Activated CD4-positive, alpha-beta T cell treated with anti-CD3 and anti-CD28 coated beads for 36 hours (primary cell): ENCODE measurements at regions of chr1 and their contacts with region 1.

Region 1: GRCh38 chr1:117605774-117606648 is at the start of gene TENT5C:
- DNase-seq: peak; percentile 98
- ATAC-seq: peak; percentile 96
- H3K4me3 Mint-ChIP-seq: peak within 1 kb of the TSS; percentile 92
- H3K27ac Mint-ChIP-seq: peak within 1 kb of the TSS; percentile 86
- H3K4me1 Mint-ChIP-seq: peaks cover 37% of the 10 kb centered on the region
- H3K27me3 Mint-ChIP-seq: peaks cover 2% of the 10 kb centered on the region
- total RNA-seq, gene TENT5C: 6.0 to 6.4 TPM

Region 2: DNA sequence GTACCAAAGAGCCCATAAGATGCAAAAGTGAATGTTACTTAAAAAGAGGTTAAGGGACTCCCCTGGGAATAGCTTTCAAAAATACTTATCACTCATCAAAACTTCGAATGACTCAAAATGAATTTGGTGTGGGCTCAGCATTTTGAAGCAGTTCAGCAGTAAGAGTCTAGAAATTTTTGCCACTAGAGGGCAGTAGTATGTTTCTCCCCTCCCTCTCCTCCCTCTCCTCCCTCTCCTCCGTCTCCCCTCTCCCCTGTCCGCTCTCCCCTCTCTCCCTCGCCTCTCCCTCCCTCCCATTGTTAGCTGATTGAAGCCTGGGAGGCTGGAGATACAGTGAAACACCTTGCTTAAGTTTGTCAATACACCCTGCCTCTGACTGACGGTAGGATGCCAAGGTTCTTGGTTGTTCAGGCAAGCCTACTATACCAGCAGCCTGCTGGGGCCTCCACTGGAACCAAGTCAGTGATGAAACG is 71.0 kb before region 1 on chr1:
- CTCF ChIA-PET with region 1: interaction called, 15 read pairs
- POLR2A ChIA-PET with region 1: interaction called, 3 read pairs
- intact Hi-C with region 1: loop called (anchors 1 kb)
- DNase-seq: peak; percentile 48
- ATAC-seq: peak; percentile 81
- H3K4me3 Mint-ChIP-seq: no peak overlapping the region
- H3K27ac Mint-ChIP-seq: no peak overlapping the region
- H3K4me1 Mint-ChIP-seq: peaks cover 25% of the 10 kb centered on the region
- H3K27me3 Mint-ChIP-seq: peaks cover 2% of the 10 kb centered on the region

Region 3: GRCh38 chr1:117674521-117675397 is 68.7 kb after region 1 on chr1:
- CTCF ChIA-PET with region 1: interaction called, 13 read pairs
- POLR2A ChIA-PET with region 1: no interaction called
- intact Hi-C with region 1: no loop called
- DNase-seq: peak; percentile 67
- ATAC-seq: peak; percentile 72
- H3K4me3 Mint-ChIP-seq: no peak overlapping the region
- H3K27ac Mint-ChIP-seq: no peak overlapping the region
- H3K4me1 Mint-ChIP-seq: peaks cover 16% of the 10 kb centered on the region
- H3K27me3 Mint-ChIP-seq: no peaks in the 10 kb centered on the region

Region 4: DNA sequence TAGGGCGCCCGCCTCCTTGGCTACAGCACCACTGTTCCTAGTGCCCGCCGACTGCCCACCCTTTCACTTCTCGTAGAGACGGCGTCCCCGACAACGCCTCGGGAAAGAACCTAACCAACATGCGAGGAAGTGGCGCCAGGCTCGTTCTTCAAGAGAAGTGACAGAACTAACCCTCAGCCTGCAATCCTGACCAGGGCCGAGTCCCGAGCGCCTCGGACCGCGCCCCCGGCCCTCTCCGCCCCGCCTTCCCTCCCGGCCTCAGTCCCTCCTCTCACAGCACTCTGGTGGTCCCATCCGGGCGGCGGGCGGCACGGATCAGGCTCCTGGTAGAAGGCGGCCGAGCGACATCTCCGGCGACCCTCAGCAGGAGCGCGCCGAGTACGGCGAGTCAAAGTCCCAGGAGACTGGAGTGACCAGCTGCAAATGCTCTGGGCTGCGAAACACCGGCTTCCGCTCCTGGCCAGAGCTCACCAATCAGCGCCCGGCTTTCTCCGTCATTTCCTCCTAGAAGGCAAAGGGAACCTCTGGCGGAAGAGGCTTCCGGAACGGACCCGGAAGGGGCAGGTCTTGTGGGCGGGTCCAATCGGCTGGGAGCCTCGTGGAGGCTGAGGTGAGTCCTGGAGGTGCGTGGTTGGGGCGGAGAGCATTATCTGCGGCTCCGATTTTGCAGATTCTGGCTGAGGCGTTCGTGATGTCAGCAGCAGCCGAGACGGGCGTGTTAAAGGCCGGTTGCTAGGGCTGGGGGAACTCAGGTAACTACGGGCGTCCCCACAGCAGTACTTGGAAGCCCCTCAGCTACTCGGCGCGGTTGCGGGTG is 323.4 kb after region 1 on chr1 and contains the starts of genes GDAP2 and WDR3:
- CTCF ChIA-PET with region 1: no interaction called
- POLR2A ChIA-PET with region 1: no interaction called
- intact Hi-C with region 1: loop called in 1 of 2 experiments (anchors 1 kb)
- DNase-seq: peak; percentile 98
- ATAC-seq: peak; percentile 97
- H3K4me3 Mint-ChIP-seq: peak within 1 kb of the TSS; percentile 94
- H3K27ac Mint-ChIP-seq: peak within 1 kb of the TSS; percentile 90
- H3K4me1 Mint-ChIP-seq: peaks cover 54% of the 10 kb centered on the region
- H3K27me3 Mint-ChIP-seq: no peaks in the 10 kb centered on the region
- total RNA-seq, gene GDAP2: 18.8 to 20.9 TPM
- total RNA-seq, gene WDR3: 45.0 to 63.7 TPM